K562 (cell line): ENCODE measurements at regions of chr5 and their contacts with region 1.

Region 1: GRCh38 chr5:5291357-5291756 is 131.1 kb upstream of the ICE1 start:
- DNase-seq: no peak
- ATAC-seq: no peak
- H3K4me3 ChIP-seq: no peak overlapping the region
- H3K27ac ChIP-seq: no peak overlapping the region
- H3K4me1 ChIP-seq: no peaks in the 10 kb centered on the region
- H3K27me3 ChIP-seq: peaks cover 7 to 20% of the 10 kb centered on the region in 2 experiments; a peak in 3 of 5 replicates
- CTCF ChIP-seq: no peak
- EP300 ChIP-seq: no peak
- POLR2A ChIP-seq: no peak
- RAD21 ChIP-seq: no peak

Region 2: GRCh38 chr5:5398046-5398445 is 106.7 kb after region 1 on chr5:
- CTCF ChIA-PET with region 1: no interaction called
- POLR2A ChIA-PET with region 1: no interaction called
- in situ Hi-C with region 1: no loop called
- intact Hi-C with region 1: loop called (anchors 1 kb)
- DNase-seq: no peak
- ATAC-seq: no peak
- H3K4me3 ChIP-seq: no peak overlapping the region
- H3K27ac ChIP-seq: no peak overlapping the region
- H3K4me1 ChIP-seq: no peaks in the 10 kb centered on the region
- H3K27me3 ChIP-seq: peaks cover 0 to 4% of the 10 kb centered on the region in 2 experiments; a peak in 2 of 5 replicates
- CTCF ChIP-seq: no peak
- EP300 ChIP-seq: no peak
- POLR2A ChIP-seq: no peak
- RAD21 ChIP-seq: no peak